ENCODE measurements at regions of chr1 and their contacts with region 1.

Region 1: DNA sequence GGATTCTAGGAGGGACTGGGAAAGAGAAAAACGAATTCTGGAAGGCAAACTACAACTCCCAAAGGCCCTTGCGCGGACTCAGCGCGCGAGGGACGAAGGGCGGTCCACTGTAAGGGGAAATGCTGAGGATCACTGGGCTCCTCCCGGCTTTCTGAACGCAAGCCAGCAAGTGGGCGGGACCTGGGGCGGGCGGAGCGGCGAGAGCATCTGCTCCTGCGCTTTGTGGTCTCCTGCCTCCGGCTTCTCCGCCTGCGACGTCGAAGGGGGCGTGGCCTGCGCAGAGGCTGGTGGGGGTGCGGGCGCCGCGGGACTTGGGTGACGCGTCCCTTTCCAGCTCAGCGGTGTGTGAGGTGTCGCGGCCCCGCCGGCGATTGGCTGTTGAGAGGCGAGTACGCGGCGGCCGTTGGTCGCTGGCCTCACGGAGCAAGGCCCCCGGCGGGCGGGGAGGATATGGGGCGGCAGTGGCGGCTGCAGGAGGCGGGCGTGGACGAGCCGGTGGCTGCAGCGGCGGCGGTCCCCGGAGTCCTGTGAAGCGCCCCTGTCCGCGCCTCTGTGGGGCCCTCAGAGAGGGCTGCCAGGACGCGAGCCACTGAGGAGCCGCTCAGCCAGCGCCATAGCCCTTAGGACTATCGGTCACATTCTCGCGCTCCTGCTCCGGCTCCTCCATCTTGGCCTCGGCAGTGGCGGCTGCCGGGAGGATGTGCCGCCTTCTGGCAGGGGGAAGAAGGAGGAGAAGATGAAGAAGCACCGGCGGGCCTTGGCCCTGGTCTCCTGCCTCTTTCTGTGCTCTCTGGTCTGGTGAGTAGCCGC is at the start of gene SUCO:
- DNase-seq: peak; percentile 98 to 100 (median 100)
- H3K4me3 ChIP-seq: peak within 1 kb of the TSS; percentile 83 to 99 (median 97)
- H3K4me3 Mint-ChIP-seq: peak within 1 kb of the TSS; percentile 97 to 100
- H3K27ac ChIP-seq: peak within 1 kb of the TSS; percentile 96 to 100
- H3K27ac Mint-ChIP-seq: peak within 1 kb of the TSS; percentile 100
- H3K4me1 ChIP-seq: peaks cover 33 to 43% of the 10 kb centered on the region in 2 donors
- H3K4me1 Mint-ChIP-seq: peaks cover 42% of the 10 kb centered on the region
- H3K27me3 ChIP-seq: no peaks in the 10 kb centered on the region
- H3K27me3 Mint-ChIP-seq: no peaks in the 10 kb centered on the region
- CTCF ChIP-seq: no peak
- polyA plus RNA-seq, gene SUCO: 6.8 to 8.5 (median 6.8) TPM

Region 2: DNA sequence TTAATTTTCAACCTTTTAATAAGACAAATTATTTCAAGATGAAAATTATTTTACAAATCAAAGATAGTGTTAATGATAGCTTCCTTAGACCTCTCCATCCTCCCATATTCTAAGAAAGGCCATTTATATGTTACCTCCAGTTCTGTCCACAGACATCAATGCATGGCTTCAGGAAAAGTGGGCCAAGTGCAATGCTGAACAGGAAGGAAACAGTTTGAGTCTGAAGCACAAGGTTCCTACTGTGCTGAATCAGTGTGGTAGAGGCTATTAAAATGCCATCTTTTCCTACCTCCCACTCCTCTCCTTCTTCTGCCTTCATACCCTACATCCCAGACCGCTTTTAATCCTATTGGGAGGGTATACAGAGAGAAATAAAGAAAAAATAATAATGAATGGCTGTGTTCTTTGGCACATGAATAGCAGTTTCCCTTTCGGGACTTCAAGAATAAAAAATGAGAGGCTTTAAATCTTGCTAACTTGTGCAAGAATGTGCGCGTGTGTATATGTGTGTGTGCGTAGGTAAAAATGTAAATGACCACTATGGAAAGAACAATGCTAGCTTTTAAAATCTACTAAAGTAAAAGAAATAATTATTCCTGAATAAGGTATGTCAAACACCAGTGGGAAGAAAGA is 175.0 kb before region 1 on chr1:
- intact Hi-C with region 1: no loop called
- DNase-seq: no peak
- H3K4me3 ChIP-seq: no peak overlapping the region
- H3K4me3 Mint-ChIP-seq: no peak overlapping the region
- H3K27ac ChIP-seq: no peak overlapping the region
- H3K27ac Mint-ChIP-seq: no peak overlapping the region
- H3K4me1 ChIP-seq: peaks cover 0 to 2% of the 10 kb centered on the region in 2 donors
- H3K4me1 Mint-ChIP-seq: peaks cover 9% of the 10 kb centered on the region
- H3K27me3 ChIP-seq: no peaks in the 10 kb centered on the region
- H3K27me3 Mint-ChIP-seq: no peaks in the 10 kb centered on the region
- CTCF ChIP-seq: no peak

Region 3: DNA sequence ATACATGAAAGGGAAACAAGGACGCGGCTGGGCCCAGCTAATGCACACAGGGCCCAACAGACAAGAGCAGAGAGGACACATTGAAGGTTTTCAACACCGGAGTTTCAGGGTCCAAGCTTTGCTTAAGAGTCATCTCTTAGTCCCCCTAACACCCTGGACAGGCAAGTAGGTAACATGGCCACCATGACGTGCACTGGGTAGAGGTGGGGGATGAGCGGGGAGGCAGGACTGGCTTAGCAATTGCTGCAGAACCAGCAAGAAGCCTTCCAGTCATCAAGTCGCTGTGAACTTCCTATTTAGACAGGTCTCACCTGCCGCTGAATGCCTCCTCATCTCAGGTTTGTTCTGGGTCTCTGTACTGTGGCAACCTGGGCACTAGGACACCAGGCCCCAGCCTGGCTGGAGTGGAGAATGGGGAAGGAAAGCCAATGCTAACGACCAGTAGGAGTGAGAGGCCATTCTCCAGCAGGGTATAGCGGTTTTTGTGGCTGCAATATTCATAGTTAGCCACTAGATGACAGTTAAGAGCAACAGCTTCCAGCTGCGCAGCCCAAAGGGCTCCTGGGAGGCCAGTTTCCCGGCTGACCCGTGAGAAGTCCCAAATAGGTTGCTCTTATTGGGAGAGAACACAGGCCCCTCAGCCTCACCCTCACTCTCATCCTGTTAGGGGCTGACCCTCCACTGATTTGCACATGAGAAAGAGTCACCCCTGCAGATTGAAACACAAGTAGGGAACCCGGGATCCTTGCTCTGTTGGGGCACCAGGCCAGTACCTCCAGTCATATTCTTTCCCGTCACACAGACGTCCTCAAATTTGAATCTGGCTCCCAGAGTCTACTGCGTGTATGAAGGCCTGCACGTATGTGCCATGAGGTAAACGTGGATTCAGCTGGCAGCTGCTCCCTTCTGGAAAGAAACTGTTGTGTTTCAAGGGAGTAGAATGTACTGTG is 83.0 kb before region 1 on chr1:
- intact Hi-C with region 1: loop called in 1 of 2 experiments (anchors 5 kb)
- DNase-seq: peak; percentile 64 to 84 (median 71)
- H3K4me3 ChIP-seq: peak overlapping the region in 1 of 3 experiments; percentile 25
- H3K4me3 Mint-ChIP-seq: peak overlapping the region; percentile 53 to 65
- H3K27ac ChIP-seq: peak overlapping the region in 1 of 2 donors; percentile 57
- H3K27ac Mint-ChIP-seq: peak overlapping the region in 6 of 7 donors; percentile 1 to 90 (median 28)
- H3K4me1 ChIP-seq: peaks cover 25 to 34% of the 10 kb centered on the region in 2 donors
- H3K4me1 Mint-ChIP-seq: peaks cover 45% of the 10 kb centered on the region
- H3K27me3 ChIP-seq: no peaks in the 10 kb centered on the region
- H3K27me3 Mint-ChIP-seq: peaks cover 0 to 5% (median 0%) of the 10 kb centered on the region in 3 donors
- CTCF ChIP-seq: peak; percentile 91

Measured in CD14-positive monocyte (primary cell).